Breast epithelium (tissue), 4 donors: ENCODE measurements at regions of chr6 and their contacts with region 1.

Region 1: GRCh38 chr6:9978480-9978879 is 436.4 kb downstream of the TFAP2A start:
- DNase-seq: no peak
- H3K4me3 ChIP-seq: no peak overlapping the region
- H3K27ac ChIP-seq: no peak overlapping the region
- H3K4me1 ChIP-seq: no peaks in the 10 kb centered on the region
- H3K27me3 ChIP-seq: no peaks in the 10 kb centered on the region
- CTCF ChIP-seq: no peak
- POLR2A ChIP-seq: no peak

Region 2: DNA sequence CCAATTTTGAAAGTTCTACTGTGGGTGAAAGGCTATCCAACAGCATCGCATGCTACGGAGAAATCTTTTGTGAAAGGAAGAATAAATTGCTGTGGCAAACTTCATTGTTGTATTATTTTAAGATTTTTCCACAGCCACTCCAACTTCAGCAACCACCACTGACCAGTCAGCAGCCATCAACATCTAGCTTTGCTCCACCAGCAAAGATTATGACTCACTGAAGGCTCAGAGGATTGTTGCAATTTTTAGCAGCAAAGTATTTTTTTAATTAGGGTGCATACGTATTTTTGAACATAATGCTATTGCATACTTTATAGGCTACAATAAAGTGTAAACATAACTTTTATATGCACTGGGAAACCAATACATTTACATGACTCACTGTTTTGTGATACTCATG is 57.1 kb before region 1 on chr6:
- intact Hi-C with region 1: loop called (anchors 2 kb)
- DNase-seq: no peak
- H3K4me3 ChIP-seq: no peak overlapping the region
- H3K27ac ChIP-seq: no peak overlapping the region
- H3K4me1 ChIP-seq: no peaks in the 10 kb centered on the region
- H3K27me3 ChIP-seq: no peaks in the 10 kb centered on the region
- CTCF ChIP-seq: no peak
- POLR2A ChIP-seq: no peak

Region 3: GRCh38 chr6:10000541-10000940 is 22.1 kb after region 1 on chr6:
- intact Hi-C with region 1: no loop called
- DNase-seq: no peak
- H3K4me3 ChIP-seq: no peak overlapping the region
- H3K27ac ChIP-seq: no peak overlapping the region
- H3K4me1 ChIP-seq: no peaks in the 10 kb centered on the region
- H3K27me3 ChIP-seq: no peaks in the 10 kb centered on the region
- CTCF ChIP-seq: no peak
- POLR2A ChIP-seq: no peak